ENCODE measurements at regions of chr4 and their contacts with region 1.

Region 1: DNA sequence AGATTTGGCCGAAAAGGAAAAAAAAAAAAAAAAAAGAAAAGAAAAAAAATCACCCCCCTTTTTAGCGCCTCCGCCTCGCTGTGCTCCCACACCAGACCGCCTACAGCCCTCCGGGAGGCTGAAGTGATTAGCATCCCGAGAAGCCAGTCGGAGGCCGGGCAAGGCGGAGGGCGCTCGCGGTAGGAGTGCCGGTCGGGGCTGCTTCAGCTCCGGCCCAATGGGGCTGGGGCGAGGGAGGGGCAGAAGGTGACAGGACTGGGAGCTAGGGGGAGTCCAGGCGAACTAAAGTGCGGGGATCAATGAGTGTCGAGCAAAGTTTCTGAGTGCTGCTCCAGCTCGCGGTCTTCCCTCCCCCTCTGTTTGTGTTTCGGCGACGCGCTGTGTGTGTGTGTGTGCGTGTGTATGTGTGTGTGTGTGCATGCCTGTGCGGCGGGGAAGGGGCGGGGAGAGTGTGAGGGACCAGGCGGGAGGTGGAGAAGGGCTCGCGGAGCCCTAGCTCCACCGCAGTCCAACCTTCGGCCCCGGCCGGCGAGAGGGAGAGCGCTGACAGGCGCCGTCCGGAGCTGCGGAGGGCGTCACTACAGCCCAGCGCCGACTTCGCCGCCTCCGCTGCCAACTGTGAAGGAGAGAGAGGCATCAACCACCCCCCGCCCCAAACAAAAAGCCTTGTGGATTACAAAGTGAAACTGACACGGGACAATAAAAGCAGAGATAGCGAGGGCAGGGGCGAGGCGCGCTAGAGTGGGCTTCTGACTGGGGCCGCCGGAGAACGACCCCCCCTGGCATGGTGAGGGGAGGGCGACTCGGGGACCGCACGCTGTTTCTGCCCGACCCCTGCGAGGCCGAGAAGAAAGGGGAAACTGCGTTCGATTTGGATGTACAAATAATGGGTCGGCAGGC is at the start of gene FAT4:
- DNase-seq: peak; percentile 96 to 97
- ATAC-seq: peak; percentile 92 to 97 (median 94)
- H3K4me3 ChIP-seq: peak within 1 kb of the TSS; percentile 83 to 97 (median 92)
- H3K27ac ChIP-seq: peak within 1 kb of the TSS; percentile 76 to 97 (median 94)
- H3K4me1 ChIP-seq: peaks cover 0 to 50% (median 30%) of the 10 kb centered on the region in 9 donors
- H3K27me3 ChIP-seq: peaks cover 0 to 55% (median 0%) of the 10 kb centered on the region in 7 donors
- CTCF ChIP-seq: peak in 5 of 9 donors; percentile 15 to 59 (median 59)
- total RNA-seq, gene FAT4: 5.4 to 16.5 (median 11.6) TPM

Region 2: DNA sequence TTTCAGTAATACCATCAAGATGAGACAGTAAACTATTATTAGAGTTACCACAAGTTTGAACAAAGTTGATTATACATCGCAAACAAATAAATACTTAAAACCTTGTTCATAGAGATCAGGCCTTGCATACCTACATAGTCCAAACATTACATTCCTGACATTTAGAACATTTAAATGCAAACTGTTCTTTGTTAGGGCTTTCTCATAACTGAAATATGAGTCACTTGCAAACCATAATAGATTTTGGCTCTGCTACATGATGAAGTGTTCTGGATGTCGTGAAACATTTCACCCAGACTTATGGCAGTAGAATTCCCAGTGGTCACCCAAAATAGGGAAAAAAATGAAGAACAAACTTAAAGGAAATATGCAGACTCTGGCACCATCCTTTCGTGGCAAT is 74.8 kb after region 1 on chr4:
- intact Hi-C with region 1: loop called in 4 of 10 experiments (anchors 2 to 5 kb)
- DNase-seq: no peak
- ATAC-seq: peak in 7 of 8 donors; percentile 53 to 88 (median 82)
- H3K4me3 ChIP-seq: peak overlapping the region in 2 of 10 donors; percentile 1 to 21
- H3K27ac ChIP-seq: peak overlapping the region; percentile 6 to 85 (median 71)
- H3K4me1 ChIP-seq: peaks cover 0 to 64% (median 40%) of the 10 kb centered on the region in 9 donors
- H3K27me3 ChIP-seq: no peaks in the 10 kb centered on the region
- CTCF ChIP-seq: no peak

Region 3: DNA sequence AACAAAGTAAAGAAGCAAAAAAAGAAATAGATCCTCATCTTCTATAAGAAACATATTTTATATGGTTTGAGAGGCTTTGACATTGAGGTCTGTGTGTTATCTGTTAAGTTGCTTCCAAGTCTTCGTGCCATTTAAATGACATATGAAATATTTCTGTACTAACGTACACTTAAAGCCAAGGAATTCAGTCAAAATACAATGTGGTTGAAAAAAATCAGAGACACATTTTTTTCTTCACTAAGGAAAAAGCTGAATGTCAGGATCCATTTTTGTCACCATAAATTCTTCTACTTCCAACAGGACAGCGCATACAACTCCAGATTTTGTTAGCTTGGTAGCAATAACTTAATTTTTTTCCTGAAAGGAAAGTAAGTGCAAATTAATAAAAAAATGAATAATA is 168.4 kb after region 1 on chr4:
- intact Hi-C with region 1: loop called in 2 of 10 experiments (anchors 10 kb)
- DNase-seq: no peak
- ATAC-seq: no peak
- H3K4me3 ChIP-seq: no peak overlapping the region
- H3K27ac ChIP-seq: no peak overlapping the region
- H3K4me1 ChIP-seq: peaks cover 0 to 5% (median 0%) of the 10 kb centered on the region in 9 donors
- H3K27me3 ChIP-seq: no peaks in the 10 kb centered on the region
- CTCF ChIP-seq: no peak

Region 4: DNA sequence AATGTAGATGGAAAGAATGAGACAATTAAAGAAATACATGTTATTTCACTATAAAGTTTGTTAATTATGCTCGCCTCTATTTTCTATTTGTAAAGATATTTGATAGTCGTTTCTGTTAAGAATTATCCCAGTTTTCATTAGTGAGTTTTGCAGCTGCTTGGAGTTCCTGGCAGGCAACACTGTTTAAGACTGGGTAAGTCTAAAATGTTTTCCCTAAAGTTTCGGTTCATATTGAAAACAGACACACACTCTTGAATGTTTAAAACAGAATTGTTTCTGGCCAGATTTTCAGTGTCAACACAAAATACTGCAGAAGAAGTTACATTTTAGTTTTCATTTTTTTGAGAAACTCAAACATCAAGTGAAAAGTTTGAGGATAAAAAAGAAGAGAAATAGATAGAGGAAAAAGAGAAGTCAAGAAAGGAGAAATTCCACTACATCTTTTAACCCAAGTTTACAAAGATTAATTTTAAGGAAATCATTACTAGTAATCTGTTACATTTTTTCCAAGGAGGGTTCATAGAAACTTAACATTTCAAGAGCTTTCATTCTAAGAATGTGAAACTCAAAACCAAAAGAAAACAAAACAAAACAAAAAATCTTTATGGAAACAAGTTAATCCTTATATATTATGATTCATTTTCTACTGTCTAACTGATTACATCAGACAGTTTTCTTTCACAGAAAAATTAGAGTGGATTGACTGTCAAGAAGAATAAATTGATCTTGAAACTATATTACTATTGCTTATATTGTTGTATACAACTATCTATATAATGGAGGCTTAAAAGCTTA is 305.3 kb after region 1 on chr4:
- intact Hi-C with region 1: loop called in 2 of 10 experiments (anchors 5 to 10 kb)
- DNase-seq: no peak
- ATAC-seq: no peak
- H3K4me3 ChIP-seq: peak overlapping the region in 4 of 10 donors; percentile 3 to 25 (median 10)
- H3K27ac ChIP-seq: peak overlapping the region in 2 of 10 donors; percentile 1 to 39
- H3K4me1 ChIP-seq: peaks cover 0 to 9% (median 0%) of the 10 kb centered on the region in 9 donors
- H3K27me3 ChIP-seq: no peaks in the 10 kb centered on the region
- CTCF ChIP-seq: no peak

Region 5: DNA sequence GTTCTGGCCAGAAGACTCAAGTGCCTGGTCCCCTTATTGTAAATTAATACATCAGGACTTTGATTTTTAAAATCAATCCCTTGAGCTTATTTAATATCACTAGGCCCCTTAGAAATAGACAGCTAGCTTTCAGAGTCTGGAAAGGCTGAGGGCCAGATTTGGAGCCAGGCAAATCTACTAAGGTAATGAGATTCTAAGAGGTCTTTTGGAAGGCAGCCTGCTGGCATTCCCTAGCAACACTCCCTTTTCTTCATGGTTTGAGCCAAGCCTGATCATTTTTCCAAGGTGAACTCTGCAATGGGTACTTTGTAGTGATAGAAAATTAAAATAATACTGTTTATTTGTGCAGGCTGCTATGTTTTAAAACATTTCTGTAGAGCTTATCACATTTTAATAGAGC is 378.3 kb after region 1 on chr4:
- intact Hi-C with region 1: no loop called
- DNase-seq: no peak
- ATAC-seq: no peak
- H3K4me3 ChIP-seq: no peak overlapping the region
- H3K27ac ChIP-seq: no peak overlapping the region
- H3K4me1 ChIP-seq: no peaks in the 10 kb centered on the region
- H3K27me3 ChIP-seq: no peaks in the 10 kb centered on the region
- CTCF ChIP-seq: no peak

Region 6: DNA sequence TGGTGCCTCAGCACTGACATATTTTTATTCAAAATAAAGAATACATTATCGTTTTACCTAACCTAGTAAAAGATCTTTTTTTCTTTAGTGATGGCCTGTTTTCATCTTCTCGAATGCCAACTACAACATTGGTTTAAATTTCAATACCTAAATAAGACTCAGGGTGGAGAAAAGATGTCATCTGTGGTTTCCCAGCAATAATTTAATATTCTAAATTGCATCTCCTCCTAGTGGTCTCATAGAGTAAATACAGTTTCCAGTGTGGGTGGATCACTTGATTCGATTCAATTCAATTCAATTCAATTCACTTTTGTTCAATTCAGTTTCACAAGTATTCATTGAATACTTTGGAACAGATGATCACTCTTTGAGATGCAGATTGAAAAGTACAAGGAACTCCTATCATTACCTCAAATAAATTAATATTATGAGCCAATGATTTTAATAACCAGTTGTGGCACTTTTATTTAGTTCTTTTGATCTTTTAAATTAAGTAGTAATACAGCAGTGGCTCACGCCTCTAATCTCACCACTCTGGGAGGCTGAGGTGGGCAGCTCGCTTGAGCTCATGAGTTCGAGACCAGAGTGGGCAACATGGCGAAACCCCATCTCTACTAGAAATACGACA is 427.0 kb after region 1 on chr4:
- intact Hi-C with region 1: loop called in 5 of 10 experiments (anchors 2 to 5 kb)
- DNase-seq: no peak
- ATAC-seq: no peak
- H3K4me3 ChIP-seq: no peak overlapping the region
- H3K27ac ChIP-seq: peak overlapping the region in 1 of 10 donors; percentile 84
- H3K4me1 ChIP-seq: peaks cover 0 to 30% (median 18%) of the 10 kb centered on the region in 9 donors
- H3K27me3 ChIP-seq: no peaks in the 10 kb centered on the region
- CTCF ChIP-seq: peak; percentile 35 to 67 (median 58)

Region 7: GRCh38 chr4:126215759-126216158 is 900.8 kb after region 1 on chr4:
- intact Hi-C with region 1: loop called in 1 of 10 experiments (anchors 5 kb)
- DNase-seq: no peak
- ATAC-seq: peak in 5 of 8 donors; percentile 46 to 77 (median 59)
- H3K4me3 ChIP-seq: no peak overlapping the region
- H3K27ac ChIP-seq: peak overlapping the region in 3 of 10 donors; percentile 23 to 29 (median 28)
- H3K4me1 ChIP-seq: peaks cover 0 to 9% (median 0%) of the 10 kb centered on the region in 9 donors
- H3K27me3 ChIP-seq: no peaks in the 10 kb centered on the region
- CTCF ChIP-seq: no peak